HEK293 (cell line): ENCODE measurements at regions of chr4 and their contacts with region 1.

Region 1: DNA sequence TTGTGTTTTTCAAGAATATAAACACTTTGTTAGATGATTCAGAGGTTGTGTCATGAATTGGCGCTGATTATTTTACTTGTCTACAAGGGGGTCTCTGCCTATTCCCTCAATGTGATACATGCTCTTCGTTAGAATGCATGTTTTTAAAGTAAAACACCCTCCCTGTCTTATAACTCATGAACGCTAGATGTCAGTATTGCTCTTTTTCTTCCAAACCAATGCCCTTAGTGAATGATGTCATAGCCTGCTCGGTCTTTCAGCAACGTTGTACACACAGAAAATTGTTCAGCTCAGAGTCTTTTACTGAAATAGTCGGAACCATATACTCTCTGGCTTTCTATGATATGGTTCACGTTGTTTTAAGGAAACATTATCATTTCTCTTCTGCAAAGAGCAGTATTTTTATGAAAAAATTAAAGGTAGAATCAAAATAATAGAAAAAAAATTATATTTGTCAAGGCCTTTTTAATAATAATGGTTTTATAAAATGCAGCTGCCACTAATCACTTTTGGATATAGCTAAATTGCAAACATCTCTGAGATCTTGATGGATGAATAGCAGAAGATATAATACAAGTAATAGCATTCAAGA is 292.9 kb downstream of the TLL1 start:
- H3K4me3 ChIP-seq: no peak overlapping the region
- H3K27ac ChIP-seq: no peak overlapping the region
- H3K4me1 ChIP-seq: no peaks in the 10 kb centered on the region
- CTCF ChIP-seq: peak; percentile 20; the same call in 1 of the 2 replicates

Region 2: DNA sequence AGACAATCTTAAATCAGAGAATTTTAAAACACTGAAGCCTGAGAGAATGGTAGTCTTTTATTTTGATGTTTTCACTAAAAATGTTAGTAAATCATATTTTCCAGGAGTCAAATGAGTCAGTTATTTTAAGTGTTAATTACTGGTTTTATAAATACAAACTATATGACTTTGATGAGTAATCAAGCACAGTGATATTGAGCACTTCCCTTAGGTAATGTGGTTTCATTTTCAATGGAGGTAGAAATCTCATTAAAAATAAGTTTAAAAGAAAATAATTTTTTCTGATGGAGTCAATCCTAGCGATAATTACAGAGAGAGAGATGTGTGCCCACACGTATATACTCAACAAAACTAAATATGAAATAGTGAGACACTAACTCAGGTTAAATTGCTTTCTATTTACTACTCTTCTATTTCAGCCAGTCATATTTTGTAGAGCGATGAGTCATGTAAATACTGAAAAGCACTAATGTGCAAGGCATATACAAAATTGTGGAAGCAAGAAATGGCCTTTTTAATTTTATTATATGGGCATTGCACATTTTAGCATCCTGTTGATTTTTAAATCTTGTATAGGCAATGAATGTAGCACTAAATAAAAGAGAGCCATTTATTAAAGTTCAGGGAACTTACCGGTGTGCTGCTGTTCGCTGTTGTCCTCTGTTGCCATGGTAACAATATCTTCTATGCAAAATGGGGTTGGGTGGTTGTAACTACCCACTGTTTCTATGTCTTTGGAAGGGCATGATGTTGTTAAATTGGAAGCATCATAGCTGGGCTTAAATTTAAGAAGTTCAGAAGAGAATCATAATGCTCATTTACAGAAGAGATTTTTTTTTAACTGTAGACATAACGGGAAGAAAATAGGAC is 220.8 kb after region 1 on chr4:
- CTCF ChIA-PET with region 1: no interaction called
- POLR2A ChIA-PET with region 1: no interaction called
- H3K4me3 ChIP-seq: no peak overlapping the region
- H3K27ac ChIP-seq: no peak overlapping the region
- H3K4me1 ChIP-seq: no peaks in the 10 kb centered on the region
- CTCF ChIP-seq: no peak

Region 3: DNA sequence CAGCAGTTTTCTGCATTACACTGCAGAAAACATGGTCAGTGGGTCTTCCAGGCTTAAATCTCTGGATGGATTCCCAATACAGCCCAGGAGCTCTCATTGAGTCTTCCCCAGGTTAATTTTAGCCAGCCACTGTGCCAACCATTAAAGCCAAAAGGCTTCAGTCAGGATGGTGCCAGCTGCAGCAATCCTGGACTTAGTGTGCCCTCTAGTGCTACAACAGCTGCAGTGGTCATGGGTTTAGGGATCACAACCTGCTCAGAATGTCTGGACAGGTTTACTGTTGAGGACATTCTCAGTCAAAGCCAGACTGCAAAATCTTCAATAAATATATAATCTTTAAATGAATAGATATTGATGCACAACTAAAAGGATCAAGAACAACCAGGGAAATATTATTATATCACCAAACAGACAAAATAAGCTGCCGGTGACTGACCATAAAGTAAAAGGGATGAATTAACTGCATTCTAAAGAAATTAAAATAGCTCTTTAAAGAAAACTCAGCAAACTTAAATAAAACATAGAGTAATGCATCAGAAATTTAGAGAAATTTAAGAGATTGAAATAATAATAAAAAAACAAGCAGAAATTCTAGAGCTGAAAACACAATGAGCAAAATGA is 428.5 kb after region 1 on chr4:
- CTCF ChIA-PET with region 1: interaction called, 25 read pairs
- POLR2A ChIA-PET with region 1: no interaction called
- H3K4me3 ChIP-seq: no peak overlapping the region
- H3K27ac ChIP-seq: no peak overlapping the region
- H3K4me1 ChIP-seq: no peaks in the 10 kb centered on the region
- CTCF ChIP-seq: no peak